T-cell (primary cell): ENCODE measurements at regions of chr2 and their contacts with region 1.

Region 1: DNA sequence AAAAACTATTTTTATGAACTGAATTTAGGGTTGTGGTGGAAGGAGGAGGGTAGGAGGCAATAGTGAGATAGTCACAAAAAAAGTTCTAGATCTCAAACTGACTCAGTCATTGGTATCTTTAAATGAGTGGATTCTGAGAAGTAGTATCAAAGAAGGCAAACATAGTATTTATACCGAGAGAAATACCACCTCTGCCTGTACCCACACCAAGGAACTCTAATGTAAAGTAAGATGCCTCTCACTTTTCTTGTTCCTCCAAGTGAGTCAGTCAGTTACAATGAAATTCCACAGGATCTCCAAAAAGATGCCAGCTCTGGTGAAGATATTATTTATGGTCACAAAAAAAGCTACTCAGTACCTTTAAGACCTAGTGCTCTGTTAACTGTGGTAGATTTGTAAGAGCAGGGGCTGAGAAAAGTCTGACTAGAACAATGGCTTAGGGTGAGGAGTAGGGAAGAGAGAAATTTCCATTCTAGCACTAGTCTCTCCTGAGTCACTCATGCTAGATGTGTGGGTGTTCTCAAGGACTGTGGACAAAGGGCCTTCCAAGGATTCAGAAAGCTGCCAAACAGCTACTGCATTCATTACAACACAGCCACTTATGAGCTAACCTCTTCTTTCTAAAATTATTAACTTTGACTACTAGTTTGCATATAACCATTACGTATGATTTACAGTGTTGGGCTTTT is 36.3 kb downstream of the YWHAQ start:
- DNase-seq: no peak
- ATAC-seq: no peak
- H3K4me3 ChIP-seq: no peak overlapping the region
- H3K4me3 Mint-ChIP-seq: no peak overlapping the region
- H3K27ac ChIP-seq: peak overlapping the region; percentile 0
- H3K27ac Mint-ChIP-seq: peak overlapping the region; percentile 34 to 44
- H3K4me1 ChIP-seq: peaks cover 0 to 15% of the 10 kb centered on the region in 2 experiments
- H3K4me1 Mint-ChIP-seq: peaks cover 43 to 62% (median 50%) of the 10 kb centered on the region in 3 donors
- H3K27me3 ChIP-seq: no peaks in the 10 kb centered on the region
- H3K27me3 Mint-ChIP-seq: no peaks in the 10 kb centered on the region

Region 2: DNA sequence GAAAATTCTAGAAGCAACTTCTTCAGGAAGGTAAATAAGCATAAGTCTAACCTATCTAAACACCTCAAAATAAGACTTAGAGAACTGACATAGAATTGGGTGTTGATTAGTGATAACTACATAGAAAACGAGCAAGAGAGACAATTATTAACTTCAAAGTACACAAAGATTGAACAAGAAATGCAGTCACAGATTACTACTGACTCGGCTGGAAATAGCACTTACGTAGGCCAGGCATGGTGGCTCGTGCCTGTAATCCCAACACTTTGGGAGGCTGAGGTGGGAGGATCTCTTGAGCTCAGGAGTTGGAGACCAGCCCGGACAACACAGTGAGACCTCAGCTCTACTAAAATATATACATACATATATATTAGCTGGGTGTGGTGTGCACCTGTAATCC is 1000.0 kb after region 1 on chr2:
- CTCF ChIA-PET with region 1: no interaction called
- POLR2A ChIA-PET with region 1: interaction called in 1 of 2 experiments, 12 read pairs
- DNase-seq: no peak
- ATAC-seq: no peak
- H3K4me3 ChIP-seq: no peak overlapping the region
- H3K4me3 Mint-ChIP-seq: no peak overlapping the region
- H3K27ac ChIP-seq: no peak overlapping the region
- H3K27ac Mint-ChIP-seq: no peak overlapping the region
- H3K4me1 ChIP-seq: no peaks in the 10 kb centered on the region
- H3K4me1 Mint-ChIP-seq: no peaks in the 10 kb centered on the region
- H3K27me3 ChIP-seq: no peaks in the 10 kb centered on the region
- H3K27me3 Mint-ChIP-seq: no peaks in the 10 kb centered on the region